AG04449 (cell line): ENCODE measurements at regions of chr20 and their contacts with region 1.

Region 1: DNA sequence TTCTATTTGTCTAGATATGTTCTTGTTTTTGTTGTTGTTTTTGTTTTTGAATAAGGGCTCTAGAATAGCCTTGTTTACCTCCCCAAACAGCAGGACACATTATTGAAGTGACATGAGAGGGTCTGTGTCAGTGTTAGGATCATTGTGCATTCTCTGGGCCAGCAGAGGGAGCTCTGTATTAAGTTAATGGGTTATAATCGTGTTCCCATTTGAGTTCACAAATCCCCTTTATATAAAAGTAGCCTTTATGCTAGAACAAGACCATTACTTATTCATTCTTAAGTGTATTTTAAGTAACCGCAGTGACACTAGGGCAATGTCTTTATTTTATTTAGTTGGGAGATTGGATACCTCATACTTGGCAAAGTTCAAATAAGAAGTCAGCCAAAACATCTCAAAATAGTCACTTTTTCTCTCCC is 44.8 kb downstream of the STK4 start:
- DNase-seq: no peak
- H3K4me3 ChIP-seq: no peak overlapping the region
- CTCF ChIP-seq: peak; percentile 54

Region 2: GRCh38 chr20:44979090-44979621 is 32.0 kb before region 1 on chr20:
- CTCF ChIA-PET with region 1: interaction called, 14 read pairs
- POLR2A ChIA-PET with region 1: no interaction called
- DNase-seq: no peak
- H3K4me3 ChIP-seq: no peak overlapping the region
- CTCF ChIP-seq: no peak

Region 3: DNA sequence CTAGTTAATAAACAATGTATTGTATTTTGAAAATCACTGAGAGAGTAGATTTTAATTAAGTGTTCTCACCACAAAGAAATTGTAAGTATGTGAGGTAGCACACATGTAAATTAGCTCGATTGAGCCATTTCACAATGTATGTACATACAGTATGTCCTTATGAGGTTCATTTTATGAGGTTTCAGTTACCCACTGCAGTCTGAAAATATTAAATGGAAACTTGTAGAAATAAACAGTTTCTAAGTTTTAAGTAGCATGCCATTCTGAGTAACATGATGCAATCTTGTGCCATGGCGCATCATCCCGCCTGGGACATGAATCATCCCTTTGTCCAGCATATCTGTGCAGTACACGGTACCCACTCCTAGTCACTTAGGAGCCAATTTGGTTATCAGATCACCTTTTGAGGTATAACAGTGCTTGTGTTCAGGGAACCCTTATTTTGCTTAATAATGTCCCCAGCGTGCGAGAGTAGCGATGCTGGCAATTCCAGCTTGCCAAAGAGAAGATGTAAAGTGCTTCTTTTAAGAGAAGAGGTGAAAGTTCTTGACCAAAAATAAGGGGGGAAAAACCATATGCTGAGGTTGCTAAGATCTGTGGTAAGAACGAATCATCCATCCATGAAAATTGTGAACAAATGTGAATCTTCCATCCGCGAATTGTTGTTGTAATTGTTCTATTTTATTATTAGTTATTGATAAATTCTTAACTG is 25.1 kb after region 1 on chr20:
- CTCF ChIA-PET with region 1: interaction called, 79 read pairs
- POLR2A ChIA-PET with region 1: interaction called, 3 read pairs
- DNase-seq: no peak
- H3K4me3 ChIP-seq: no peak overlapping the region
- CTCF ChIP-seq: no peak

Region 4: DNA sequence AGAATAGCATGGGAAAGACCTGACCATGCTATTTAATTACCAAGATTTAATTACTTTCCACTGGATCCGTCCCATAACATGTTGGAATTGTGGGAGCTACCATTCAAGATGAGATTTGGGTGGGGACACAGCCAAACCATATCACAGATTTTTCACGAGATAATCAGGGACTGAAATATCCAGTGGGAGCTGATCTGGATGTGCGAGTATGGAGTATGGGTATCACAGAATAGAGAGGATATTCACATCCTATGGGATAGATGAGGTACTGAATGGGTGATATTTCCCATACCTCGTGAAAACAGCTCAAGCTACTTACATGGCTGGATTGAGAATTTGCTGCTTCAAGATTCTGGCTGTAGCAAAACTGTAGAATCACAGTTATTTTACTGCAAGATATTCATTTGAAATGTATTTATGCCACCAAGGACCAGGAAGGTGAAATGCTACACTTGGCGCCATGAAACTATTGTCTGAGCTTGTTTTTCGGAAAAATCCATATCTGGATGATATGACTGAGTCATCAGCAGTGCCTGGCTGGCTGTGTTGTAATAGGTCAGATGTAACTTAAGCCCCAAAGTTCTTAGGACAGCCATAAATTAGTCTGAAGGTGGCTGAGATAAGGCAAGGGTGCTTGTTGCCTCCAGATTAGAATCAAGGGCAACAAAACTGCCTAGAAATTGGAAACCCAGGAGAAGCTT is 60.0 kb after region 1 on chr20:
- CTCF ChIA-PET with region 1: interaction called, 11 read pairs
- POLR2A ChIA-PET with region 1: no interaction called
- DNase-seq: no peak
- H3K4me3 ChIP-seq: no peak overlapping the region
- CTCF ChIP-seq: no peak

Region 5: DNA sequence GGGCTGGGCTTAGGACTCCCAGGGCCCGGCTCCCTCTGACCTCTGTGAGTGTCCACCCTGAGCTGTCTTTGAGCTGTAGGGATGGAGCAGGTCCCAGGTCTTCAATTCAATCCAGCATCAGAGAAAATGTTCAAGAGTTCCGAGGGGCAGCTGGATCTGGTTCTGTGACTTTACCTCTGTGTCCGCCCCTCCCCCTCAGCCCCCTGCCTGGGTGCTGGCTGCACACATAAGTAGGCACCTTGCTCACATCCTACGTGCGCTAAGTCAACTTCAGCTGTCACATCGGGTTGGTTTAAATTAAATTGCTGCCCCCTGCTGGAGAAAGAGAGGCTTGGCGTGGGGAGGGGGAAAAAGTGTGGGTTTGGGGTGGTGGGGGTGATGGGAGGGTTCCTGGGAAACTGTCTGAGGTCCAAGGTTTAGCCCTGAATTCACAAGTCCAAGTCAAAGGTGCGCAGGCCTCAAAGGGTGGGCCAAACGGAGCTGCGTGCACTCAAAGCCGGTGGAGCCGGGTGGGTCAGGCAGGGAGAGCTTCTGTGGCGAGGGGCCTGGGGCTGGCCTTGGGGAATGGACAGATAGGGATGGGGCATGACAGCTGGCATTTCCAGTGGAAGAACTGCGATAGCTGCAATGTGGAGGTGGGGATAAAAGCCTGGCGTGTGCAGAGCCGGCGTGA is 100.8 kb after region 1 on chr20:
- CTCF ChIA-PET with region 1: interaction called, 30 read pairs
- POLR2A ChIA-PET with region 1: no interaction called
- DNase-seq: no peak
- H3K4me3 ChIP-seq: no peak overlapping the region
- CTCF ChIP-seq: peak; percentile 27